G401 (cell line): ENCODE measurements at regions of chr12 and their contacts with region 1.

Region 1: DNA sequence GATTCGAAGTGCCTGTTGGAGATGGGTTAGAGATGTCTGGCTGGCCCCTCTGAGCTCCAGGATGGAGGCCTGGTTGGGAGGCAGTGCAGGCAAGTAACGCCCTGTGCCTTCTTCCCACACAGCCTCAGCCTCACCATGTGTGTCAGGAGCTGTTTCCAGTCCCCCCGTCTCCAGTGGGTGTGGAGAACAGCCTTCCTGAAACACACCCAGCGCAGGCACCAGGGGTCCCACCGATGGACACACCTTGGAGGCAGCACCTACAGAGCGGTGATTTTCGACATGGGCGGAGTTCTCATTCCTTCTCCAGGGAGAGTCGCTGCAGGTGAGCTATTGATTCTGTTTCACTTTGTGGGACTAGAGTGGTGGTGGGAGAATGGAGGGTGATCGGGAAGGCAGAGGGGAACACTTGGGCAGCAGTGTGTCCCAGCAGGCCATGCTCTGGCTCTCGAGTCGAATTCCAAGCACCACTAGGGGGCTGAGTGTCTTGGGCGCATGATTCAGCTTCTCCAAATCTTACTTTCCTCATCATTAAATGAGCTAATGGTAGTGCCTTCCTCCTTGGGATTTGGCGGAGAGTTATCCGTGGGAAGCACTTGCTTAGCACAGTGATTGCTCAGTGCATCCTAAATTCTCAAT is 6.8 kb downstream of the ACAD10 start:
- DNase-seq: no peak

Region 2: DNA sequence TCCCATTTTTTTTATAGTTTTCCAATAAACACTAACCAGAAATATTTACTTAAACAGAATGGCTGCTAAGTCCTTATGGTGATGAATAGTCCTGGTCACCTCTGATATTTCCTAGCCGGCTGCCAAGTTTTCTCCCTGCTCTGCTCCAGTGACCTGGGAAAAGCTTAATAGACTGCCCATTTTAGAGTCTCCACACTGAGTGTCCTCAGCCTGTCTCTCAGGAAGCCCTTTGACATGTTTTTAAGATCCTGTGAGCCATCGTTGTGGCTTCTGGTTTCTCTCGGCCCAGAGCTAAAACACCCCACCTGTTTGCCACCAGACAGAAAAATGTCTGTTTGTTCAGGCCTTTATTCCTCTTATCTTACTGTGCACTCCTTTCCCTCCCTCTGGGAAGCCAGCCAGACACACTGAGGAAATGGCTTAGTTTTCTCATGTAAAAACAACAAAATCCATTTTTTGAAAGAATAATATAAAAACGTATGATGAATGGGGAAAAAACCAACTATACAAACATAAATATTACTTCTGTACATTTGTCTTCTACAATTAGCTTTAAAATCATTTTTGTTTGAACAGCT is 48.6 kb after region 1 on chr12:
- in situ Hi-C with region 1: no loop called
- DNase-seq: no peak

Region 3: GRCh38 chr12:111807232-111807631 is 114.5 kb after region 1 on chr12:
- in situ Hi-C with region 1: loop called (anchors 10 kb)
- DNase-seq: no peak